MCF 10A (cell line): ENCODE measurements at regions of chr2 and their contacts with region 1.

Region 1: DNA sequence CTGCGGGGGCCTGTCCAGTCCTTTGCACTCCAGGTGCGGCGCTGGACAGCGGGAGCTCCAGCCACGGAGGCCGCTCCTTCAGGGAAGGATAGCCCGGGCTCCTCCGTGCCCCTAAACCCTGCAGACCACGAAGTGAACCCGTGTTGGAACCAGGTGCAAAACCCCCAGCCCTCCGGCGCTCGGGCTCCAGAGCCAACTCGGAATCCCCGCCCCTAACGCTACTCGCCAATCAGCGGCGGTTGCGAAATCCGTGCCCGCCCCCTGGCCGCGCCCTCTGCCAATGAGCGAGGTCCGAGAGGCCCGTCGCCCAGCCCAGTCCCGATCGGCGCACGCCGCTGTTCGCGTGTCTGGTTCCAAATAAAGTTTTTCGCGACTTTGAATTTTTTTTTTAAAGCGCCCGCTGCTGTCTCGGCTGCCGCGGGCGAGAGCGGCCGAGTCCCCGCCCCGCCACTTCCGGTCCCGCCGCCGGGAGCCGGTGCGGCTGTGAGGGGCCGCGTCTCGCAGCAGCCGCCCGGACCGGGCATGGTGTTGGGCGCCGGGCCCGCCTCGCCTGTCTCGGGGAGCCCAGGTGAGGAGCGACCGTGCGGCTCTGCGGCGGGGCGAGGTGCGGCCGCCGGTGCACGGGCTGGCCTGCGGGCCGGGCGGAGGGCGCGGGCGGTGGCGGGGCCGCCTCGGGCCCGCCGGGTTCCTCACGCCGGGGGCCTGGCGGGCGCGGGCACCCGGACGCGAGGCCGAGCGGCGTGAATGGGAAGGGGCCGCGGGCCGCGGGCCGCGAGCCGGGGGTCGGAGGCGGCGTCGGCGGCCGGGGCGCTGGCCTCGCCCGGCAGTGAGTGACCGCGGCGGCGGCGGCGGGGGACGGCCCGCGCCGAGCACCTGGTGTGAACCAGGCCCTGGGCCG is at the start of gene UBE2F:
- DNase-seq: peak; percentile 96
- H3K4me3 Mint-ChIP-seq: peak within 1 kb of the TSS; percentile 83
- H3K27ac Mint-ChIP-seq: peak within 1 kb of the TSS; percentile 74
- H3K4me1 Mint-ChIP-seq: peaks cover 32% of the 10 kb centered on the region
- H3K27me3 Mint-ChIP-seq: no peaks in the 10 kb centered on the region
- CTCF ChIP-seq: no peak
- total RNA-seq, gene UBE2F: 116 and 125 TPM in 2 replicates

Region 2: DNA sequence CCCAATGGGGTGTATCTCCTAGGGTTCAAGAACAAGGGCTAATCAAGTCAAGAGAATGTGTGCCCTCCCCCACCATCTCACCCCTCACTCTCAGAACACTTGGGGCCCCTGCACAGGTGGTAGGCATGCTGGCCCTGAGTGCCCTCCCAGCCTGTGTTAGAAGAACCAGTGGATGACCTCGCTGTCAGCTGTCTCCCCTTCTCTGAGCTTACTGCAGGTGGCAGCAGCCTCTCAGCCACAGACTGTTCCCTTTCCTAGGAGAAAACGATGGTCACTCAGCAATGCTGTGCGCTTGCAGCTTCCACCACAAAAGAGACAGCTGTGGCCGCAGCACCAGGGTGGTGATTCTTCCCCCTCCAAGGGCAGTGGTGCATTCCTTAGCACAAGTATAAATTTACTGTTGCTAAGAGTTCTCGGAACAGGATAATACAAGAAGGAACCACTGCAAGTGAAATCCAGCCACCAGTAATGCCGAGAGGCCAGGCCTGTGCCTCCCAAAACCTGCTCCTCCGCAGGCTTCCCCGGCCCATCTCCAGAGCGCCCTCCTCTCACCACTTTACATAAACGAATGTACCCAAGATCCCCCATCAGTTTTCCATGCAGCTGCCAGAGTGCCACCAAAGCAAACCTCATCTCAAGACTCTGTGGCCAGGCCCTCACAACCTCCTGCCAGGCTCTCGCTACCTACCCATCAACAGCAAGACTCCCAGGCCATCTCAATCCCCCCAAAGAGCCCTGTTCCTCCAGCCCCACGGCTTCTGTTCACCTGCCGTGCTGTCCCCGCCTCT is 108.3 kb before region 1 on chr2:
- CTCF ChIA-PET with region 1: interaction called, 4 read pairs
- POLR2A ChIA-PET with region 1: interaction called, 6 read pairs
- intact Hi-C with region 1: loop called (anchors 1 kb)
- DNase-seq: peak; percentile 84
- H3K4me3 Mint-ChIP-seq: peak overlapping the region; percentile 43
- H3K27ac Mint-ChIP-seq: no peak overlapping the region
- H3K4me1 Mint-ChIP-seq: peaks cover 8% of the 10 kb centered on the region
- H3K27me3 Mint-ChIP-seq: no peaks in the 10 kb centered on the region
- CTCF ChIP-seq: peak; percentile 81

Region 3: DNA sequence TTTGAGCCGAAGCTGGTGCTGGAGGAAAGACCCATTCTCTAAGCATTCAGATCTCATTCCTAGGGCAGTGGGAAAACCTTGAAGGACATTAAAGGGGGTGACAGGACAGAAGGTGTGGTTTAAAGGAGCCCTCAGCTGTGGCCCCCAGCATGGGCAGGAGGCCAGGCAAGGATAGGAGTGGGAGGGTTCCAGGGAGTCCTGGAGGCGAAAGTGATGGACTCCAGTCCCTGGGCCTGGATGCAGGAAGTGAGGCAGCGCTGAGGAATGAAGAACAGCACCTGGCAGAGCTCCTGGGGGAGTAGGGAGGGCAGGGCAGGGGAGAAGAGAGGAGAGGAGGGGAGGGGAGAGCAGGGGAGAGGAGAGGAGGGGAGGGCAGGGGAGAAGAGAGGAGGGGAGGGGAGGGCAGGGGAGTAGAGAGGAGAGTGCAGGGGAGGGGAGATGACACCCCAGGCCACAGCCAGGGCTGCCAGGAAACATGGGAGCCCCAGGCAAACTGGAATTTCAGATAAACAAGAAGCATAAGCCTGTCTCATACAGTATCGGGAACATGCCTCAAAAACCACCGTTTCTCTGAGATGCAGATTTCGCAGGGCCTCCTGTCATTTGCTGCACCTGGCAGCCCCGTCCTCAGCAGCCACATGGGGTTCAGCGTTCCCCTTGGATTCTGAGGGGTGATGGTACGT is 101.7 kb before region 1 on chr2:
- CTCF ChIA-PET with region 1: interaction called, 3 read pairs
- POLR2A ChIA-PET with region 1: interaction called, 12 read pairs
- intact Hi-C with region 1: no loop called
- DNase-seq: peak; percentile 86
- H3K4me3 Mint-ChIP-seq: no peak overlapping the region
- H3K27ac Mint-ChIP-seq: peak overlapping the region; percentile 86
- H3K4me1 Mint-ChIP-seq: peaks cover 24% of the 10 kb centered on the region
- H3K27me3 Mint-ChIP-seq: no peaks in the 10 kb centered on the region
- CTCF ChIP-seq: no peak

Region 4: DNA sequence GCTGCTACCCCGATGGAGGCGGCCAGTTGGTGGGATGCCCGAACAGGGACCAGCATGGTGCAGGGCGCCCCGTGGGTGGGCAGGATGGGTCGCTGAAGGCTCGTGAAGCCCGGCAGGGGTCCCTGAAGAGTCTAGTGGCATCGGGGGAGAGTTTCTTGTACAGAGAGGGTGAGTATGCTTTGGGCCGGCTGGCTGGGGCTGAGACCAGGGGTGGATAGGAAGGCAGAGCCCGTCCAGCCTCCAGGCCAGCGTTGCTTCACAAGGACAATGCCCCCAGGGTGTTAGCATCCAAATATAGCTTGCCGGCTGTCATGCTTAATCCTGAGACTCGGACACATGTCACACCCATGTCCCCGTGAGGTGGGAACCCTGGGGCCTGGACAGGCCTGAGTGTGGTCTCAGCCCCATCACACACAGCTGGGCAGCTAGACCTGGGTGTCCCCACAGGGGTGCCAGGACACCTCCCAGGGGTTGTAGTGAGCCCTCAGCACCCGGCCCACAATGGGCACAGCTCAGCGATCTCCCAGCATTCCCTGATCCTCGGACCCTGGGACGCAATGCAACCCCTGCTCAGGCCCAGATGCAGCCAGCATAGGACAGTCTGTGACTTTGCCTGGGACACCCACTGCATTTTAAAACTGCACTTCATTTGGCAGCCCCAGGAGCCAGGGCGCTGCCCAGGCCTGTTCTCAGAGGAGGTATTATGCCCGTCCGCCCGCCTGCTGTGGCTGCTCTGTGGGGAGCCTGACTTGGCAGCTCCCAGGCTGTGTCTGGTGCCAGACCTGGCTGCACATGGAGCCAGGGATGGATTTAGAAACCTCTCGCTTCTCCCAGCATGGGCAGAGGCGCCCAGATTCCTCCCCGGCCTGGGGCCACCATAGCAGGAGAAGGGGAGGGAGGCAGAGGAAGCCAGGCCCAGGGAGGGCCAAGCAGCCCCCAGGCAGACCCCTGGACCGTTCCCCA is 71.0 kb before region 1 on chr2:
- CTCF ChIA-PET with region 1: no interaction called
- POLR2A ChIA-PET with region 1: interaction called, 23 read pairs
- intact Hi-C with region 1: no loop called
- DNase-seq: peak; percentile 91
- H3K4me3 Mint-ChIP-seq: no peak overlapping the region
- H3K27ac Mint-ChIP-seq: peak overlapping the region; percentile 92
- H3K4me1 Mint-ChIP-seq: peaks cover 27% of the 10 kb centered on the region
- H3K27me3 Mint-ChIP-seq: no peaks in the 10 kb centered on the region
- CTCF ChIP-seq: no peak

Region 5: DNA sequence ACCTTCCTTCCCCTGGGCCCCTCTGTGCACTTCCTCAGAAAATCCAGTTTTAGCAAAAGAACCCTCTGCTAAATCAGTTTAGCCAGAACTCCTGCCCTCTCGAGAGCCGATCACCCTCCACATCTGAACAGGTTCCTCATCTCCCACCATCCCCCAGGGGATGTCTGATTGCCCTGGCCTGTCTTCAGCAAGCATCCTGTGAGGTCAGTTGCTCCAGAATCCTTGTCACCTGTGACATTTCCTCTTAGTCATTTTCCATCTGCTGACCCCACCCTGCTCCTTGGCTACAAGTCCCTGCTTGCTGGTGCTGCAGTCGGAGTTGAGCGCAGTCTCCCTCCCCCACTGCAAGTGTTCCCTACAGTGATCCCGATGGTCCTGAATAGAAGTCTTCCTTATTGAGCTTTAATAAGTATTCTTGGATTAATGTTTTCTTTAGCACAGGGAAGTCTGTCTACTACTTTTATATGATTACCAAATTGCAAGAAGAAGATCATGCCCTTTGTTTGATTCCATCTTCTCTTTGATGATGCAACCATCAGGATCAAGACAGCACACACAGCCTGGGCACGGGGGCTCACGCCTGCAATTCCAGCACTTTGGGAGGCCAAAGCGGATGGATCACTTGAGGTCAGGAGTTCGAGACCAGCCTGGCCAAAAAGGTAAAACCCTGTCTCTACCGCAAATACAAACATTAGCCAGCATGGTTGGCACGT is 30.9 kb before region 1 on chr2:
- CTCF ChIA-PET with region 1: interaction called, 3 read pairs
- POLR2A ChIA-PET with region 1: interaction called, 15 read pairs
- intact Hi-C with region 1: no loop called
- DNase-seq: peak; percentile 65
- H3K4me3 Mint-ChIP-seq: no peak overlapping the region
- H3K27ac Mint-ChIP-seq: peak overlapping the region; percentile 65
- H3K4me1 Mint-ChIP-seq: peaks cover 38% of the 10 kb centered on the region
- H3K27me3 Mint-ChIP-seq: no peaks in the 10 kb centered on the region
- CTCF ChIP-seq: no peak

Region 6: DNA sequence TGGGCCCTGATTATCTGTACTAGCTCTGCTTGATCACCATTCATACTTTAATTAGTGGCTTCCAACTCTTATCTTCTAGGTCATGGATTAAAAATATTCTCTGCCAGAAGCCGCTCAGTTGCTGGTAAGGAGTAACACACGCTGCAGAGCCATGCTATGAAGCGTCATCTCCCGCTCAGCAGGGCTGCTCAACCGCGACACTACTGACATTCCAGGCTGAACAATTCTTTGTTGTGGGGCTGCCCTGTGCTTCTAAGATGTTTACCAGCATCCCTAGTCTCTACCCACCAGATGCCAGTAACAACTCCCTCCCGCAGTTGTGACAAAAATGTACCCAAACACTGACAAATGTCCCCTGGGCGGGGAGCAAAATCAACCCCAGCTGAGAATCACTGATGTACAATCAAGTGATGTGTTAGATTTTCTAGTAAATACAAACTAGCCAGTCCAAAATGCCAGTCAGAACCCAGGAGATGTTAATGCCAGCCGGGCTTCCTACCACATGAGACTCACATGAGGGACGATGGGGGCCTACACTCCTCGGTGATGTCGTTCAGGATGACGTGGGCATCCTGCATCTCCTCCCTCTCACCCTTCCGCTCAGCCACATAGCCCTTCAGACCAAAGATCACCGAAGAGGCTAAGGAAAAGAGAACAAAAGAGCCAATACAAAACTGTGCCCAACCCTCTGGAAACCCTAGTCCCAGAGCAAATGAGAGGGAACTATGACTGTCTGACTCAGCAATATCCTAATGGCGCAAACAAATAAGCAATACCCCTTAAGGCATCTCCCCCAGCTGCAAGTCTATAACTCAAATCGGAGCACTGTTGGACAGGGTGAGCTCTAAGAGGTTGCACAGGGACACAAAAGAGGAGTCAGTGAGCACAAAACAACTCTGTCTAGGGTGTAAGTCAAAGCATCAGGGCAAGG is 221.1 kb after region 1 on chr2:
- CTCF ChIA-PET with region 1: no interaction called
- POLR2A ChIA-PET with region 1: no interaction called
- intact Hi-C with region 1: no loop called
- DNase-seq: no peak
- H3K4me3 Mint-ChIP-seq: no peak overlapping the region
- H3K27ac Mint-ChIP-seq: no peak overlapping the region
- H3K4me1 Mint-ChIP-seq: no peaks in the 10 kb centered on the region
- H3K27me3 Mint-ChIP-seq: no peaks in the 10 kb centered on the region
- CTCF ChIP-seq: no peak